Activated CD4-positive, alpha-beta memory T cell treated with anti-CD3 and anti-CD28 coated beads for 36 hours (primary cell): ENCODE measurements at regions of chr15 and their contacts with region 1.

Region 1: GRCh38 chr15:88638626-88639372 is at the start of gene ISG20:
- DNase-seq: peak; percentile 99
- H3K4me3 Mint-ChIP-seq: peak within 1 kb of the TSS; percentile 82
- H3K27ac Mint-ChIP-seq: peak within 1 kb of the TSS; percentile 99
- H3K4me1 Mint-ChIP-seq: peaks cover 74% of the 10 kb centered on the region
- H3K27me3 Mint-ChIP-seq: no peaks in the 10 kb centered on the region
- total RNA-seq, gene ISG20: 68.2 to 74.5 TPM

Region 2: DNA sequence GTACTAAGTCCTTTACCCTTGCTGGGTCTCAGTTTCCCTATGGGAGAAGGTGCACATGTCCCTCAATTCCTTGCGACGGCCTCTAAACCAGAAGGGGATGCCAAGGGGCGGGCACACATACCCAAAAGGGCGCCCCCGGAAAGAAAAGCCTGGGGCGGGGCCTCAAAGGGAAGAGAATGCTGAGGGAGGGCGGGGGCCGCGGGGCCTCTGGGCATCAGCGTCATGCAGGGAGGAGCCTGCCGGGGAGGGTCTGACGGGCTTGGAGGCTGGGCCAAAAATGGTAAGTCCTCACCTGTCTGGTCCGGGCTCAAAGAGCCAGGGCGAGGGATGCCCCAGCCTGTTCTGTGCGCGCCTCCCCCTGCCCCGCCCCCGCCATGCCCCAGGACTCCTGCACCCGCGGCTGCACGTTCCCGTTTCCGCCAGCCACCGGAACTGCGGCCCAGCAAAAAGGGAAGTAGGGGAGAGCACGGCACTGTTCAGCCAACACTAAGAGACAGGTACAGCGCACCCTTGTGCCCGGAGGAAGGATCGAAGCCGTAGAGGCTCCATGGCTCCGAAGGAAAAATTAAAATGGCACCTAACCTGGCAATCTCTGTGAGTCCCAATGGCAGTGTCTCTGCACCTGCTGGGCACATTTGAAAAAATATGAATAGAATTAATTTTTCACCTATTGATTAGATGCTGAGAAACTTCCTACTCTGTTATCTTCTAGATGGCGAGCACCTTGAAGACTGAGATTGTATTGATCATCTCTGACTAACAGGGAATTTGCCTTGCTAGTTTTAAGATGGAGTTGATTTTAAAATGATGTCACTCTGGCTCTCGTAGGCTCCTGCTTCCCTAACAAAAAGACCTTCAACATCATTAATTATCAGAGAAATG is 92.3 kb before region 1 on chr15 and contains the start of gene DET1:
- CTCF ChIA-PET with region 1: no interaction called
- POLR2A ChIA-PET with region 1: no interaction called
- intact Hi-C with region 1: loop called (anchors 1 kb)
- DNase-seq: peak; percentile 98
- H3K4me3 Mint-ChIP-seq: peak within 1 kb of the TSS; percentile 88
- H3K27ac Mint-ChIP-seq: peak within 1 kb of the TSS; percentile 89
- H3K4me1 Mint-ChIP-seq: peaks cover 13% of the 10 kb centered on the region
- H3K27me3 Mint-ChIP-seq: no peaks in the 10 kb centered on the region
- total RNA-seq, gene DET1: 1.9 to 2.2 TPM

Region 3: GRCh38 chr15:88649286-88649733 is 10.5 kb after region 1 on chr15:
- CTCF ChIA-PET with region 1: no interaction called
- POLR2A ChIA-PET with region 1: interaction called, 6 read pairs
- intact Hi-C with region 1: loop called (anchors 2 kb)
- DNase-seq: peak; percentile 90
- H3K4me3 Mint-ChIP-seq: peak overlapping the region; percentile 46
- H3K27ac Mint-ChIP-seq: peak overlapping the region; percentile 92
- H3K4me1 Mint-ChIP-seq: peaks cover 68% of the 10 kb centered on the region
- H3K27me3 Mint-ChIP-seq: no peaks in the 10 kb centered on the region

Region 4: DNA sequence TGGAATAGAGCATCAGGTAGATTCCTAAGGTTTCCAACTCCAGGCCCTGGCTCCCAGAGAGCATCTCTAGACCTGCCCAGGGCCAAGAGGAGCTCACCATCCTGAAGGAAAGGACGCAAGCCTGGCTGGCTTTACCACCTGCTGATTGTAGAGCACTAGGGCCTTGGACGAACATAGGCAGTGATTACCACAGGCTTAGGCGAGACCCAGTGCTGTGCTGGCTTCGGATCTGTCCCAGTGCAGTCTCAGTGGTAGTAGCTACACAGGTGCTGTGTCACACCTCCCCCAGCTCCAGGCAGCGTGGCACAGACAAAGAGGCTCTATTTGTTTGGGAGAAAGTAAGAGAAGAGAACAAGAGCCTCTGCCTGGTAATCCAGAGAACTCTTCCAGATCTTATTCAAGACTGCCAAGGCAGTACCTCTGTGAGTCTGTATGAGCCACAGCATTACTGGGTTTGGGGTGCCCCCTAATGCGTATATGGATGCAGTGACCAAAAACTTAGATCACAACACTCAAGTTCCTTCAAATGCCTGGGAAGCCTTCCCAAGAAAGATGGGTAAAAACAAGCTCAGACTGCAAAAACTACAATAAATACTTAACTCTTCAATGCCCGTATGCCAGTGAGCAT is 25.5 kb after region 1 on chr15:
- CTCF ChIA-PET with region 1: interaction called, 11 read pairs
- POLR2A ChIA-PET with region 1: no interaction called
- intact Hi-C with region 1: loop called (anchors 1 kb)
- DNase-seq: peak; percentile 67
- H3K4me3 Mint-ChIP-seq: no peak overlapping the region
- H3K27ac Mint-ChIP-seq: no peak overlapping the region
- H3K4me1 Mint-ChIP-seq: peaks cover 19% of the 10 kb centered on the region
- H3K27me3 Mint-ChIP-seq: peaks cover 4% of the 10 kb centered on the region

Region 5: GRCh38 chr15:88805031-88805782 is 166.4 kb after region 1 on chr15:
- CTCF ChIA-PET with region 1: no interaction called
- POLR2A ChIA-PET with region 1: no interaction called
- intact Hi-C with region 1: no loop called
- DNase-seq: peak; percentile 29
- H3K4me3 Mint-ChIP-seq: no peak overlapping the region
- H3K27ac Mint-ChIP-seq: no peak overlapping the region
- H3K4me1 Mint-ChIP-seq: peaks cover 6% of the 10 kb centered on the region
- H3K27me3 Mint-ChIP-seq: peaks cover 43% of the 10 kb centered on the region